ENCODE measurements at regions of chr4 and their contacts with region 1.

Region 1: DNA sequence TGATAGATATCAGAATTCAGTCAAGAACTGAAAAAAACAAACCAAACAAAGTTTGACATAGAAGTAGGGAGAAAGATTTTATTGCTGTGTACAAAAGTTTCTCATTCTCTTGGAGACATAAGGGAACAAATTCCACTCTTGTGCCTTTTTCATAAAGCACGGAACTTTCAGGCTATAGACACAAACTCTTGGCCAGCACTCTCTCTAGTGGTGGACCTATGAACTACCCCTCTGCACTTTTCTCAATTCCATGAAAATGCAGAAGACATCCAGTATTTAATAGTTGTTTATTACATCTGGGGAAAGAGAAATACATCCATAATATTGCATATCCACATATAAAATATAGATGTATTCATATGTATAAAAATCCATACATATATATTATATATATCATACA is 291.6 kb upstream of the HS3ST1 start:
- DNase-seq: no peak
- H3K4me3 ChIP-seq: no peak overlapping the region
- H3K27ac ChIP-seq: no peak overlapping the region
- H3K4me1 ChIP-seq: peaks cover 0 to 5% (median 3%) of the 10 kb centered on the region in 4 donors
- H3K27me3 ChIP-seq: no peaks in the 10 kb centered on the region
- CTCF ChIP-seq: peak; percentile 55 to 79 (median 67)
- EP300 ChIP-seq: no peak
- POLR2A ChIP-seq: no peak

Region 2: DNA sequence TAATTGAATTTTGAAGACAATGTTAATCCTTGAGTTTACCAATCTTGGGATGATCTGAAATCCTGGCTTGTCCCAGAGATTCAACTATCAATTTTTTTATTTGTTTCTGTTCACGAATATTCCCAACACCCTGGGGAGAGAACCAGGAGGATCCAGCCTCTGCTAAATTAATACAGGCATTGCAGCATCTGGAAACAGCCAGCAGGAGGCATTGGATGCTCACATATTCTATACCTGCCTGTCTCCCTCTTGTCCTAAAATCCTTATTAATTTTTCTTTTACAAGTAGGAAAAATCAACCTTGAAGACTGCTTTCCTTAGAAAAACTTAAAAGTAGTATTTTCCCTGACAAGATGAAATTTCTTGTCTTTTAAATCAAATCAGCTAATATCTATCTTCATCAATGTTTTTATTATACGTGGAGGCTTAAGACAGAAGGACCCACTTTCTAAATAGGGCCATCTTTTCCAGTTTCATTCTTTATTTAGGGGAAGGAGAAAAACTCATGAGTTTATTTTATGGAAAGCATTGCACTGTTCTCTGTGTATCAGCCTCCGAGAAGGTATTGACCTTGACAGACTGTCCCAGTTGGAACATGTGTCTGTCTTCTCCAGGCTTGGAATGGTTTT is 1138.1 kb before region 1 on chr4:
- in situ Hi-C with region 1: loop called in 3 of 4 experiments (anchors 25 kb)
- intact Hi-C with region 1: no loop called
- DNase-seq: peak; percentile 36
- H3K4me3 ChIP-seq: no peak overlapping the region
- H3K27ac ChIP-seq: no peak overlapping the region
- H3K4me1 ChIP-seq: peaks cover 0 to 5% (median 2%) of the 10 kb centered on the region in 4 donors
- H3K27me3 ChIP-seq: no peaks in the 10 kb centered on the region
- CTCF ChIP-seq: peak; percentile 70 to 86 (median 85)
- EP300 ChIP-seq: no peak
- POLR2A ChIP-seq: no peak

Region 3: DNA sequence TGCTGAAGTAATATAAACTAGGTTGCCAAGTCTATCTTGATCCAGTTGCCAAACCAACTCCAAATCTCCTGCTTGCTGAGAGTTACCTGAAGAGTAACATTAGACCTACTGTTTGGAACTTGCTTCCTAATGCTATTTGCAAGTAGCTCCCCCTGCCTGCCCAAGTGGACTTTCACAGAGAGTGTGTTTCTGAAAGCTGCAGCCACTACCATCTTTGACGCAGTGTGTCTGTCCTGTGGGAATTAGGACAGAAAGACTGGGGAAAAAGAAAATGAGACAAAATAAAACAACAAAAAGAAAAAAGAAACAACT is 96.6 kb before region 1 on chr4:
- in situ Hi-C with region 1: loop called in 1 of 4 experiments (anchors 25 kb)
- intact Hi-C with region 1: no loop called
- DNase-seq: peak; percentile 71
- H3K4me3 ChIP-seq: no peak overlapping the region
- H3K27ac ChIP-seq: no peak overlapping the region
- H3K4me1 ChIP-seq: peaks cover 3 to 38% (median 10%) of the 10 kb centered on the region in 4 donors
- H3K27me3 ChIP-seq: no peaks in the 10 kb centered on the region
- CTCF ChIP-seq: peak; percentile 18 to 61 (median 41)
- EP300 ChIP-seq: no peak
- POLR2A ChIP-seq: no peak

Region 4: GRCh38 chr4:12118651-12119213 is 398.4 kb after region 1 on chr4:
- in situ Hi-C with region 1: no loop called
- intact Hi-C with region 1: no loop called
- DNase-seq: no peak
- H3K4me3 ChIP-seq: no peak overlapping the region
- H3K27ac ChIP-seq: no peak overlapping the region
- H3K4me1 ChIP-seq: no peaks in the 10 kb centered on the region
- H3K27me3 ChIP-seq: no peaks in the 10 kb centered on the region
- CTCF ChIP-seq: no peak
- EP300 ChIP-seq: no peak
- POLR2A ChIP-seq: no peak